H1 (cell line): ENCODE measurements at regions of chr5 and their contacts with region 1.

Region 1: GRCh38 chr5:138963763-138964371 is 88.7 kb upstream of the LRRTM2 start:
- DNase-seq: no peak
- H3K4me3 ChIP-seq: no peak overlapping the region
- H3K27ac ChIP-seq: no peak overlapping the region
- H3K4me1 ChIP-seq: peaks cover 0 to 15% (median 10%) of the 10 kb centered on the region in 4 experiments
- H3K27me3 ChIP-seq: no peaks in the 10 kb centered on the region; a peak in 1 of 7 replicates
- CTCF ChIP-seq: no peak
- EP300 ChIP-seq: no peak
- POLR2A ChIP-seq: no peak
- RAD21 ChIP-seq: no peak

Region 2: DNA sequence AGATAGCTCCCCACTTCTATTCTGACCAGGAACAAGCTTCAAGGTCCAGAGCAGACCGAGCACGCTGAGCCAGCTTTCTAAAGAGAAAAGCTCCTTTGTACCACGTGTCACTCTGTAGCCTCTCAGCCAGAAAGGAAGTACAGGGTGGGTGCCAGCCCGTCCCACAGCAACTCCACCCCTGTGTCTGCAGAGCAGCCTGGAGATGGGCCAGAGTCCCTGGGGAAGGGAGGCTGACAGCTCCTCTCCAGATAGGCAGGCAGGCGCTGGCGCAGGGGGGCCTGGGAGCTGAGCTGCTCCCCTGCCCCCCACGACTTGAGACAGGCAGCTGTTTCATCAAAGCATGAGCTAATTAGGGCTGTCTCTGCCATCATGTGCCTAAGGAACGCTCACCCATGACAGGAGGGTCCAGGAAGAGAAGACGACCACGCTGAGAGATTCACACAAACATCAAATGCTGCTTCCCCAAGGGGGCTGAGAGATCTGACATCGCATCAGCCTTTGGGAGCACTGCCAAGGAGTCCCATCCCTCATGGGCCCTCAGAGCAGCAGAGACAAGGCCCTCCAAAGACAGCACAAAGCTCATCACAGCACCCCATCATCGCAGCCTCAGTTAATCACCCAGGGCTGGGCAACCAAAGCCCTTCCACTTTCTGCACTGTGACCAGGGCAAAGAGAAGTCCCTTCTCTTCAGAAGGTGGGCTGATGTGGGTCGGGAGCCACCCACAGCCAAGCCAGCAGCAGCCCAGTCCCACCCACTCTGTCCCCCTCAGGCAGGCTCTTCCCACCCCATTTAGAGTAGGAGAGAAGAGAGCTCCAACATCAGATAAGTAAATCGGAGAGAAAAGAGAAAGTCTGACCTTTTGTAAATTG is 10.2 kb before region 1 on chr5:
- CTCF ChIA-PET with region 1: interaction called, 18 read pairs
- POLR2A ChIA-PET with region 1: interaction called, 5 read pairs
- DNase-seq: no peak
- H3K4me3 ChIP-seq: no peak overlapping the region
- H3K27ac ChIP-seq: no peak overlapping the region
- H3K4me1 ChIP-seq: peaks cover 0 to 7% (median 4%) of the 10 kb centered on the region in 4 experiments; a peak in 3 of 7 replicates
- H3K27me3 ChIP-seq: no peaks in the 10 kb centered on the region
- CTCF ChIP-seq: no peak
- EP300 ChIP-seq: no peak
- POLR2A ChIP-seq: no peak
- RAD21 ChIP-seq: no peak